ENCODE measurements at regions of chr11 and their contacts with region 1.

Region 1: DNA sequence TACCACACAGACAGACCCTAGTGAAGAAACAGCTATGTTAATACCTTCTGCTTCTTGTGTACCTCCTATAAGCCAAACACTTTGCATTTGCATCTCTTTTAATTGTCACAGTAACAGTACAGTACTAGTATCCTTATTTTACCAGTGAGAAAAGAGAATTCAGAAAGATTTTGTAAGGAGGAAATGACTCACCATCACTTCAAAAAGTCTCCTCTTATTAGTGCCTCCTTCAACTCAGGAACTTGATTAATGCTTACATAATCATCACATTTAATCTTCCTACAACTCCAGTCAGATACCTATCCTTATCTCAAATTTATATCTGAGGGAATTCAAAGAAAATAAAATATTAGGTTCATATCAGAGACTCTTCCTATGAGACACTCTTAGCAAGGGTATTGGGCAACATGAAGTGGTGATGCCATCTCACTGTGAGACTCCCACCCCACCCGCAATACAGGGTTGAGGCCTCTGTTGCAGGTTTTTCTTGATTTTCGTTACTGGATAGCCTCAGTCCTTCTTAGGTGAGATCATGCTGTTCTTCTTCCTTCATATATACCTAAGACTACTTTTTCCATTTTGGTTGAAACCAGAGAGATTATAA is 26.1 kb upstream of the CTSC start:
- DNase-seq: no peak
- ATAC-seq: peak; percentile 74
- H3K4me3 ChIP-seq: no peak overlapping the region
- H3K4me3 Mint-ChIP-seq: no peak overlapping the region
- H3K27ac ChIP-seq: no peak overlapping the region
- H3K27ac Mint-ChIP-seq: peak overlapping the region in 2 of 9 donors; percentile 19 to 26
- H3K4me1 ChIP-seq: peaks cover 11 to 26% of the 10 kb centered on the region in 2 donors
- H3K4me1 Mint-ChIP-seq: peaks cover 21 to 57% (median 49%) of the 10 kb centered on the region in 7 donors
- H3K27me3 ChIP-seq: no peaks in the 10 kb centered on the region
- H3K27me3 Mint-ChIP-seq: no peaks in the 10 kb centered on the region

Region 2: DNA sequence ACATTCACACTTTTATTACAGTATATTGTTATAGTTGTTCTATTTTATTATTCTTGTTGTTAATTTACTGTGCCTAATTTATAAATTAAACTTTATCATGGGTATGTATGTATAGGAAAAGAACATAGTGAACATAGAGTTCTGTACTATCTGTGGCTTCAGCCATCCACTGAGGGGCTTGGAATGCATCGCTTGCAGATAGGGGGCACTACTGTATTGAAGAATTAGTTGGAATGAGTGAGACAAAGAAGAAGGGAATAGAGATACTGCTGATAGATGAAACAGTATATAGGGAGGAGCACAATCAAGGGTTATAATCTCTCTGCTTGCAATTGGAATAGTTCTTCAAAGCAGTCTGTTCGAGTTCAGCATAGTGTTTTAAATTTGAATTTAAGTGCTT is 620.7 kb before region 1 on chr11:
- CTCF ChIA-PET with region 1: no interaction called
- POLR2A ChIA-PET with region 1: no interaction called
- intact Hi-C with region 1: no loop called
- DNase-seq: no peak
- ATAC-seq: no peak
- H3K4me3 ChIP-seq: no peak overlapping the region
- H3K4me3 Mint-ChIP-seq: no peak overlapping the region
- H3K27ac ChIP-seq: no peak overlapping the region
- H3K27ac Mint-ChIP-seq: no peak overlapping the region
- H3K4me1 ChIP-seq: no peaks in the 10 kb centered on the region
- H3K4me1 Mint-ChIP-seq: no peaks in the 10 kb centered on the region
- H3K27me3 ChIP-seq: no peaks in the 10 kb centered on the region
- H3K27me3 Mint-ChIP-seq: peaks cover 0 to 5% (median 0%) of the 10 kb centered on the region in 5 donors

Region 3: GRCh38 chr11:88231894-88232482 is 131.7 kb before region 1 on chr11:
- CTCF ChIA-PET with region 1: no interaction called
- POLR2A ChIA-PET with region 1: no interaction called
- intact Hi-C with region 1: loop called in 1 of 2 experiments (anchors 5 kb)
- DNase-seq: peak in 5 of 9 donors; percentile 1 to 50 (median 29)
- ATAC-seq: peak; percentile 65
- H3K4me3 ChIP-seq: no peak overlapping the region
- H3K4me3 Mint-ChIP-seq: no peak overlapping the region
- H3K27ac ChIP-seq: no peak overlapping the region
- H3K27ac Mint-ChIP-seq: no peak overlapping the region
- H3K4me1 ChIP-seq: no peaks in the 10 kb centered on the region
- H3K4me1 Mint-ChIP-seq: peaks cover 0 to 4% (median 0%) of the 10 kb centered on the region in 7 donors
- H3K27me3 ChIP-seq: no peaks in the 10 kb centered on the region
- H3K27me3 Mint-ChIP-seq: peaks cover 0 to 8% (median 0%) of the 10 kb centered on the region in 5 donors

Region 4: DNA sequence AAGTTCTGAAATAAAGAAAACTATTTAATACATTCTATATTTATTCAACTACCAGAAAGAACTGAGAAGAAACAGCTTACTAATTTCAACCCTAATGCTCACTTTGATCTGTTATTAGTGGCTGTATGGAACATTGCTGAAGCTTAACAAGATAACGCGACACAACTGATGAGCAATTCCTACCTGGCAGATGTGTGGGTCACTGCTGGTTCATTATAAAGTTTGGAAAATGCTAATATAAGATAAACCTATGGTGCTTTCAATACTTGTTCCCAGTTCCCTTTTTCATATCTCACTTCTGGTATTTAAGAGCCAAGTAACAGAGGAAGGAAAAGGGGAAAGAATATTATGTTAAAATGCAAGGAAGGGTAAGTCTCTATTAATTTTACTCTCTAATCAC is 36.6 kb before region 1 on chr11:
- CTCF ChIA-PET with region 1: no interaction called
- POLR2A ChIA-PET with region 1: no interaction called
- intact Hi-C with region 1: loop called in 1 of 2 experiments (anchors 5 kb)
- DNase-seq: no peak
- ATAC-seq: no peak
- H3K4me3 ChIP-seq: no peak overlapping the region
- H3K4me3 Mint-ChIP-seq: peak overlapping the region in 1 of 10 donors; percentile 12
- H3K27ac ChIP-seq: no peak overlapping the region
- H3K27ac Mint-ChIP-seq: peak overlapping the region in 2 of 9 donors; percentile 33 to 53
- H3K4me1 ChIP-seq: peaks cover 26 to 68% of the 10 kb centered on the region in 2 donors
- H3K4me1 Mint-ChIP-seq: peaks cover 64 to 98% (median 90%) of the 10 kb centered on the region in 7 donors
- H3K27me3 ChIP-seq: no peaks in the 10 kb centered on the region
- H3K27me3 Mint-ChIP-seq: no peaks in the 10 kb centered on the region

Region 5: DNA sequence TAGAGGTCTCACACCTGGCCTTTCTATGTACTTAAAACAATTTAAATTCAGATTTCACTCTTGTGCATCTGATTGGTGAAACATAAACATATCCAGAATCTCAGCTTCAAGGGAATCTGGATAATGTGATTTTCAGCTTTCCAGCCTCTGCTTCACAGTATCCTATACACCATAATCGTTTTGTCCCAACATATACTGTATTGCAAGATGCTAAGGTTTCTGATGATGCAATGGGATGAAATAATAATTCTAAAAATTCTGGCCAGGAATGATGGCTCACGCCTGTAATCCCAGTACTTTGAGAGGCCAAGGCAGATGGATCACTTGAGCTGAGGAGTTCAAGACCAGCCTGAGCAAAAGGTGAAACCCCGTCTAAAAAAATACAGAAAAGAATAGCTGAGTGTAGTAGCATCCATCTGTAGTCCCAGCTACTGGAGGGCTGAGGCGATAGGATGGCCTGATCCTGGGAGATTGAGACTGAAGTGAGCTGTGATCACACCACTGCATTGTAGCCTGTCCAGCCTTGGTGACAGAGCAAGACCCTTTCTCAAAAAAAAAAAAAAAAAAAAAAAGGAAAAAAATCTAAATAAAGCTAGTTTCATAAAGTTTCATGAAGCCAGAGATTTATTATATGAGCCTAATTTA is 14.9 kb after region 1 on chr11:
- CTCF ChIA-PET with region 1: no interaction called
- POLR2A ChIA-PET with region 1: no interaction called
- intact Hi-C with region 1: no loop called
- DNase-seq: no peak
- ATAC-seq: no peak
- H3K4me3 ChIP-seq: no peak overlapping the region
- H3K4me3 Mint-ChIP-seq: no peak overlapping the region
- H3K27ac ChIP-seq: no peak overlapping the region
- H3K27ac Mint-ChIP-seq: no peak overlapping the region
- H3K4me1 ChIP-seq: no peaks in the 10 kb centered on the region
- H3K4me1 Mint-ChIP-seq: peaks cover 0 to 15% (median 0%) of the 10 kb centered on the region in 7 donors
- H3K27me3 ChIP-seq: no peaks in the 10 kb centered on the region
- H3K27me3 Mint-ChIP-seq: peaks cover 0 to 2% (median 0%) of the 10 kb centered on the region in 5 donors

Region 6: GRCh38 chr11:88402192-88402715 is 38.6 kb after region 1 on chr11:
- CTCF ChIA-PET with region 1: no interaction called
- POLR2A ChIA-PET with region 1: no interaction called
- intact Hi-C with region 1: loop called in 1 of 2 experiments (anchors 5 kb)
- DNase-seq: no peak
- ATAC-seq: peak; percentile 52
- H3K4me3 ChIP-seq: no peak overlapping the region
- H3K4me3 Mint-ChIP-seq: no peak overlapping the region
- H3K27ac ChIP-seq: no peak overlapping the region
- H3K27ac Mint-ChIP-seq: no peak overlapping the region
- H3K4me1 ChIP-seq: peaks cover 0 to 3% of the 10 kb centered on the region in 2 donors
- H3K4me1 Mint-ChIP-seq: peaks cover 0 to 51% (median 18%) of the 10 kb centered on the region in 7 donors
- H3K27me3 ChIP-seq: no peaks in the 10 kb centered on the region
- H3K27me3 Mint-ChIP-seq: no peaks in the 10 kb centered on the region

Region 7: GRCh38 chr11:88414385-88414861 is 50.8 kb after region 1 on chr11:
- CTCF ChIA-PET with region 1: interaction called, 3 read pairs
- POLR2A ChIA-PET with region 1: no interaction called
- intact Hi-C with region 1: loop called in 1 of 2 experiments (anchors 2 kb)
- DNase-seq: peak in 6 of 9 donors; percentile 16 to 50 (median 38)
- ATAC-seq: peak; percentile 73
- H3K4me3 ChIP-seq: peak overlapping the region; percentile 18
- H3K4me3 Mint-ChIP-seq: peak overlapping the region; percentile 58 to 84 (median 73)
- H3K27ac ChIP-seq: peak overlapping the region; percentile 6
- H3K27ac Mint-ChIP-seq: peak overlapping the region in 7 of 9 donors; percentile 48 to 88 (median 74)
- H3K4me1 ChIP-seq: peaks cover 24 to 37% of the 10 kb centered on the region in 2 donors
- H3K4me1 Mint-ChIP-seq: peaks cover 27 to 61% (median 34%) of the 10 kb centered on the region in 7 donors
- H3K27me3 ChIP-seq: no peaks in the 10 kb centered on the region
- H3K27me3 Mint-ChIP-seq: no peaks in the 10 kb centered on the region

Region 8: DNA sequence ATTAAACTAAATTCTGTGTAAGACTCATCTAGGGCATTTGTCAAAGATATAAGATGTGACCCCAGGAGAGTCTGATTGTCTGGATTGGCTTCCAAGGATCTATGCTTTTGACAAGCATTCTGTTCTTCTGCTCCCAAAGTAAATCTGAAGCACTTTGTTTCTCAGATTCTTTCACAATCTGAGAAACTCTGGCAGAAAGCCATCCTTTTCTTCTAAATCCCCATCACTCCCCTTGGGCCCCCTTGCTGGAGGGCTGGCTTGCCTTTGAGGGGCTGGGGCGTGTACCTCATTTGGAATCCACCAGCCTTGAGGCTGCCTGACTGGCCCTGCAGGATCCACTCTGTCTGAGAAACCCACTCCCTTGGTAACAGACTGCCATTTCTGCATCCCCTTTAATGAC is 147.3 kb after region 1 on chr11:
- CTCF ChIA-PET with region 1: no interaction called
- POLR2A ChIA-PET with region 1: no interaction called
- intact Hi-C with region 1: no loop called
- DNase-seq: no peak
- ATAC-seq: no peak
- H3K4me3 ChIP-seq: no peak overlapping the region
- H3K4me3 Mint-ChIP-seq: peak overlapping the region in 1 of 10 donors; percentile 16
- H3K27ac ChIP-seq: no peak overlapping the region
- H3K27ac Mint-ChIP-seq: no peak overlapping the region
- H3K4me1 ChIP-seq: peaks cover 0 to 5% of the 10 kb centered on the region in 2 donors
- H3K4me1 Mint-ChIP-seq: peaks cover 8 to 17% (median 15%) of the 10 kb centered on the region in 7 donors
- H3K27me3 ChIP-seq: peaks cover 0 to 18% of the 10 kb centered on the region in 2 donors
- H3K27me3 Mint-ChIP-seq: peaks cover 62 to 85% (median 77%) of the 10 kb centered on the region in 5 donors

Measured in naive thymus-derived CD4-positive, alpha-beta T cell (primary cell).